BJ (cell line): ENCODE measurements at regions of chr20 and their contacts with region 1.

Region 1: GRCh38 chr20:51695574-51696303 is 72.5 kb downstream of the ATP9A start:
- DNase-seq: peak; percentile 77
- H3K4me3 ChIP-seq: peak overlapping the region; percentile 5; the same call in 1 of the 2 replicates
- H3K27me3 ChIP-seq: no peaks in the 10 kb centered on the region
- CTCF ChIP-seq: no peak

Region 2: GRCh38 chr20:51631011-51631950 is 64.5 kb before region 1 on chr20:
- CTCF ChIA-PET with region 1: no interaction called
- POLR2A ChIA-PET with region 1: no interaction called
- DNase-seq: peak; percentile 96
- H3K4me3 ChIP-seq: no peak overlapping the region
- H3K27me3 ChIP-seq: no peaks in the 10 kb centered on the region
- CTCF ChIP-seq: no peak

Region 3: GRCh38 chr20:51712501-51713197 is 16.9 kb after region 1 on chr20:
- CTCF ChIA-PET with region 1: interaction called, 12 read pairs
- POLR2A ChIA-PET with region 1: no interaction called
- DNase-seq: no peak
- H3K4me3 ChIP-seq: no peak overlapping the region
- H3K27me3 ChIP-seq: no peaks in the 10 kb centered on the region
- CTCF ChIP-seq: peak; percentile 27; the same call in 1 of the 2 replicates

Region 4: GRCh38 chr20:52083627-52084232 is 388.0 kb after region 1 on chr20:
- CTCF ChIA-PET with region 1: interaction called, 13 read pairs
- POLR2A ChIA-PET with region 1: no interaction called
- DNase-seq: no peak
- H3K4me3 ChIP-seq: no peak overlapping the region
- H3K27me3 ChIP-seq: no peaks in the 10 kb centered on the region
- CTCF ChIP-seq: peak; percentile 71